Spleen (tissue), 13 donors: ENCODE measurements at regions of chr22 and their contacts with region 1.

Region 1: DNA sequence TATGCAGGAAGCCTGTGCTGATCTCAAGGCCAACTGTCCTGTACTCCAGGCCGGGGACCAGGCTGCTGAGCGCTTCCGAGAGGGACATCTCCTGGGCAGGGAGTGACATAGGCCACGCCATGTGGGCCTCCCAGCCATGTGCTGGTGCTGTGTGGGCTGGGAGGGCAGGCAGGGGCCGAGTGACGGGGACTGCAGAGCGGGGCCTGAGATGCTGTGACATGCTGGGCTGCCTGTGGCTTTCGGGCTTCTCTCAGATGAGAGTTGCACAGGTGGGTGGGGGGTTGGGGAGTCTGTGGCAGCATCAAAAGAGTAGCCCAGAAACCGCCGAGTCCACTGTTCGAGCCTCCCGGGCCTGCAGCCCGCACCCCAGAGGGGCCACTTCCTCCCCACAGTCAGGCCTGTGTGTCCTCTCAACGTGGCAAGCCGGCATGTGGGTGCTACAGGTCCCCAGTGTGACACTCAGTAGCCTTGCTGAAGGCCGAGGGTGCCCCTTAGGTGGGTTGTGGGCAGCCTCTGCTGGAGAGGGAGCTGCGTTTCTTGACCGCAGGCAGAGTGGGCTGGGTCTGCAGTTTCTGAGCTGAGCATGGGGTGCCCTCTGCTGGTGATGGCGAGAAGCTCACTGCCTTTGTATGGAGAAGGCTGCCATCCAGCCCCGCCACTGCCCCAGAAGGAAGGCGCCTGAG is 101.2 kb downstream of the BCR start:
- DNase-seq: peak; percentile 94
- H3K4me3 ChIP-seq: no peak overlapping the region
- H3K27ac ChIP-seq: peak overlapping the region in 3 of 8 donors; percentile 38 to 77 (median 50)
- H3K4me1 ChIP-seq: peaks cover 7 to 60% (median 26%) of the 10 kb centered on the region in 6 donors
- H3K27me3 ChIP-seq: no peaks in the 10 kb centered on the region
- CTCF ChIP-seq: peak; percentile 90 to 97 (median 95)
- POLR2A ChIP-seq: no peak

Region 2: GRCh38 chr22:23178512-23179254 is 102.9 kb before region 1 on chr22:
- intact Hi-C with region 1: loop called (anchors 2 kb)
- DNase-seq: peak; percentile 91
- H3K4me3 ChIP-seq: no peak overlapping the region
- H3K27ac ChIP-seq: peak overlapping the region in 4 of 8 donors; percentile 1 to 89 (median 83)
- H3K4me1 ChIP-seq: peaks cover 35 to 73% (median 52%) of the 10 kb centered on the region in 6 donors
- H3K27me3 ChIP-seq: no peaks in the 10 kb centered on the region
- CTCF ChIP-seq: peak; percentile 90 to 98 (median 95)
- POLR2A ChIP-seq: no peak

Region 3: GRCh38 chr22:23192181-23192957 is 89.2 kb before region 1 on chr22:
- intact Hi-C with region 1: no loop called
- DNase-seq: no peak
- H3K4me3 ChIP-seq: no peak overlapping the region
- H3K27ac ChIP-seq: no peak overlapping the region
- H3K4me1 ChIP-seq: peaks cover 0 to 67% (median 18%) of the 10 kb centered on the region in 6 donors
- H3K27me3 ChIP-seq: no peaks in the 10 kb centered on the region
- CTCF ChIP-seq: no peak
- POLR2A ChIP-seq: no peak

Region 4: GRCh38 chr22:23219822-23220484 is 61.6 kb before region 1 on chr22:
- intact Hi-C with region 1: loop called (anchors 10 kb)
- DNase-seq: peak; percentile 89
- H3K4me3 ChIP-seq: peak overlapping the region in 3 of 8 donors; percentile 1 to 49 (median 10)
- H3K27ac ChIP-seq: peak overlapping the region; percentile 17 to 87 (median 81)
- H3K4me1 ChIP-seq: peaks cover 60 to 100% (median 99%) of the 10 kb centered on the region in 6 donors
- H3K27me3 ChIP-seq: no peaks in the 10 kb centered on the region
- CTCF ChIP-seq: no peak
- POLR2A ChIP-seq: no peak